Colonic mucosa (tissue), 4 donors: ENCODE measurements at regions of chr3 and their contacts with region 1.

Region 1: GRCh38 chr3:113136071-113136470 is 75.3 kb upstream of the BOC start:
- DNase-seq: no peak
- H3K4me3 ChIP-seq: no peak overlapping the region
- H3K27ac ChIP-seq: no peak overlapping the region
- H3K4me1 ChIP-seq: no peaks in the 10 kb centered on the region
- H3K27me3 ChIP-seq: no peaks in the 10 kb centered on the region
- CTCF ChIP-seq: peak; percentile 28

Region 2: DNA sequence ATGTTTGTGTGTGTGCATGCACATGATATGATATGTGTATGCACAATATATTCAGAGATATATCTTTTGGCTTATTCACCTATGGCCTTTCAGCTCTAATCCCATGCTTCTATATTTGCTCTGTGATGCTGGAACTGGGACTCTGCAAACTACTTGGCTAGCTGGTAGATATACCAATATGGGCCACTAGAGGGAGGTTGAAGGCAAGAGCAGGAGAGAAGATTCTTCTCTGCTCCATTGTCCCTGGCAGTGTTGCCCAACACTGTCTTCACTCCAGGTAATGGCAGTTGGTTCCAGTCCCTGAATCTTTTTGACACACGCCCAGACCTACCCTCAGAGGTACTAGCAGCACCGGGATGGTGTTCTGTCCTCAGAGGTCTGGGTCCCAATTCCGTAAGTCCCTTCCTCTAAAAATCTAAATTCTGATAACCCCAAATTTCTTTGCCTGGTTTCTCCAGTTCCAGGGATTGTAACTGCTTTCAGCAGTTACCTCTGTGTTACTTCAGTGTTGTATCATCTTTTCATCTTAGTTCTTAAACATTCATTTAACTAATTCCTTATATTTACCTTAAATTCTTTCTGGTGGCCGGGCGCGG is 100.6 kb before region 1 on chr3:
- intact Hi-C with region 1: no loop called
- DNase-seq: peak; percentile 51
- H3K4me3 ChIP-seq: no peak overlapping the region
- H3K27ac ChIP-seq: no peak overlapping the region
- H3K4me1 ChIP-seq: no peaks in the 10 kb centered on the region
- H3K27me3 ChIP-seq: no peaks in the 10 kb centered on the region
- CTCF ChIP-seq: peak; percentile 77

Region 3: DNA sequence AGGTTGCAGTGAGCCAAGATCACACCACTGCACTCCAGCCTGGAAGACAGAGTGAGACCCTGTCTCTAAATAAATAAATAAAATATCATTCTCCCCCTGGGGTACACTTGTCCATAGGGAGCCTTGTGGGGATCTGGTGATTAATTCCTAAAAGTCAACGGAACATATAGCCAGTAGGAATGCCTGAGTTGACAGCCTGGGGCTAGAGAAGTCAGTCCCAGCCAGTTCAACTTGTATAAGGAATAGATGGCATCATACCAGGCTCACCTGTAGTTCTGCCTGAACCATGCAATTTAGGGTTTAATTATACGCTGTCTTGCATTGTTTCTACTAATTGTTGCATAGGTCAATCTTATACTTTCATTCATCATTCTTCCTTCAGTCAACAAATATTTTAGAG is 69.4 kb after region 1 on chr3:
- intact Hi-C with region 1: no loop called
- DNase-seq: peak; percentile 1
- H3K4me3 ChIP-seq: no peak overlapping the region
- H3K27ac ChIP-seq: no peak overlapping the region
- H3K4me1 ChIP-seq: no peaks in the 10 kb centered on the region
- H3K27me3 ChIP-seq: no peaks in the 10 kb centered on the region
- CTCF ChIP-seq: no peak

Region 4: GRCh38 chr3:113279686-113280085 is 143.6 kb after region 1 on chr3:
- intact Hi-C with region 1: loop called (anchors 5 kb)
- DNase-seq: no peak
- H3K4me3 ChIP-seq: no peak overlapping the region
- H3K27ac ChIP-seq: no peak overlapping the region
- H3K4me1 ChIP-seq: no peaks in the 10 kb centered on the region
- H3K27me3 ChIP-seq: no peaks in the 10 kb centered on the region
- CTCF ChIP-seq: no peak

Region 5: GRCh38 chr3:113441051-113441770 is 305.1 kb after region 1 on chr3 and contains the start of gene CFAP44:
- intact Hi-C with region 1: no loop called
- DNase-seq: peak; percentile 85
- H3K4me3 ChIP-seq: peak within 1 kb of the TSS; percentile 4
- H3K27ac ChIP-seq: no peak within 1 kb of the TSS
- H3K4me1 ChIP-seq: no peaks in the 10 kb centered on the region
- H3K27me3 ChIP-seq: no peaks in the 10 kb centered on the region
- CTCF ChIP-seq: no peak
- total RNA-seq, gene CFAP44: 5.4 to 8.5 TPM